HEK293 (cell line): ENCODE measurements at regions of chr11 and their contacts with region 1.

Region 1: GRCh38 chr11:93921695-93922468 is 71.5 kb upstream of the VSTM5 start:
- H3K4me3 ChIP-seq: no peak overlapping the region
- H3K27ac ChIP-seq: no peak overlapping the region
- H3K4me1 ChIP-seq: no peaks in the 10 kb centered on the region
- CTCF ChIP-seq: peak; percentile 40

Region 2: DNA sequence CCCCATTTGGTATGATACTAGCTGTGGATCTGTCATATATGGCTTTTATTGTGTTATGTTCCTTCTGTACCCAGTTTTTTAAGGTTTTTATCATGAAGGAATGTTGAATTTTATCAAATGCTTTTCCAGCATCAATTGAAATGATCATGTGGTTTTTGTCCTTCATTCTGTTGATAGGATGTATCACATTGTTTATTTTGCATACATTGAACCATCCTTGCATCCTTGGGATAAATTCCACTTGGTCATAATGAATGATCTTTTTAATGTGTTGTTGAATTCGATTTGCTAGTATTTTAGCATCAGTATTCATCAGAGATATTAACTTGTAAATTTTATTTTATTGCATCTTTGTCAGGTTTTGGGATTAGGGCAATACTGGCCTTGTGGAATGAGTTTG is 211.6 kb before region 1 on chr11:
- CTCF ChIA-PET with region 1: no interaction called
- POLR2A ChIA-PET with region 1: no interaction called
- H3K4me3 ChIP-seq: no peak overlapping the region
- H3K27ac ChIP-seq: no peak overlapping the region
- H3K4me1 ChIP-seq: no peaks in the 10 kb centered on the region
- CTCF ChIP-seq: no peak

Region 3: DNA sequence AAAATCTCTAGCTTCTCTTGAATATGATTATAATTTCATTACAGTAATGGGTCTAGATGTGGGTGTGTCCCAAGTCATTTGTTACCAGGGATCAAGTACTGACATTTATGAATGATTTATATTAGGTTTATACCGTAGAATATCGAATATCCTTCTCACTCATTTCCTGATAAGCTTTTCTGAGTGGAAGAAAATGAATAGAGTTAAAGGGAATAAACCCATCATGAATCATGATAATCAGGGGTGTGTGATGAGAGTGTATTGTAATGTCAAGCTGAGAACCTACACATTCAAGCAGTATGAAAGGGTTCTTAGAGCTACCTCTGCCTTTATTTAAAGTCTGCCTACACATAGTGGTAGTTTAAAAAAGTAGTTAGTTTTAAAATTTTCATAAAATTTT is 120.5 kb before region 1 on chr11:
- CTCF ChIA-PET with region 1: no interaction called
- POLR2A ChIA-PET with region 1: no interaction called
- H3K4me3 ChIP-seq: no peak overlapping the region
- H3K27ac ChIP-seq: no peak overlapping the region
- H3K4me1 ChIP-seq: no peaks in the 10 kb centered on the region
- CTCF ChIP-seq: no peak

Region 4: GRCh38 chr11:93869830-93870229 is 52.1 kb before region 1 on chr11:
- CTCF ChIA-PET with region 1: no interaction called
- POLR2A ChIA-PET with region 1: no interaction called
- H3K4me3 ChIP-seq: no peak overlapping the region
- H3K27ac ChIP-seq: no peak overlapping the region
- H3K4me1 ChIP-seq: no peaks in the 10 kb centered on the region
- CTCF ChIP-seq: no peak

Region 5: DNA sequence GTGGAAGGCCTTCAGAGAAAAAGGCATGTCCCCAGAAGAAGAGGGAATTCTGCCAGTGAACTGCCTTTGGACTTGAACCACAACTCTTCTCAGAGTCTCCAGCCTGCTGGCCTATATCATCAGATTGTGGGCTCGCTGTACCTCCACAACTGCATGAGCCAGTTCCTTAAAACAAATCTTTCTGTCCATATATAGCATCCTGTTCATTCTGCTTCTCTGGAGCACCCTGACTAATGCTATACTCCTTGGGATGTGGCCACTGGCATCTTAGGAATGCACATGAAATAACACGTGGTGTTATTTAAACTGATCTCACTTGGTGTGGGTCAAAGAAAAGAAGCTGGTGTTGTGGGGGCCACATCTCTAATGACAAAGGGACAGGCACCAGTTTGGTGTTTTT is 13.2 kb before region 1 on chr11:
- CTCF ChIA-PET with region 1: interaction called, 14 read pairs
- POLR2A ChIA-PET with region 1: no interaction called
- H3K4me3 ChIP-seq: no peak overlapping the region
- H3K27ac ChIP-seq: no peak overlapping the region
- H3K4me1 ChIP-seq: no peaks in the 10 kb centered on the region
- CTCF ChIP-seq: no peak

Region 6: GRCh38 chr11:93933230-93933629 is 11.3 kb after region 1 on chr11:
- CTCF ChIA-PET with region 1: interaction called, 21 read pairs
- POLR2A ChIA-PET with region 1: no interaction called
- H3K4me3 ChIP-seq: no peak overlapping the region
- H3K27ac ChIP-seq: no peak overlapping the region
- H3K4me1 ChIP-seq: no peaks in the 10 kb centered on the region
- CTCF ChIP-seq: no peak

Region 7: GRCh38 chr11:93942176-93942575 is 20.3 kb after region 1 on chr11:
- CTCF ChIA-PET with region 1: interaction called, 10 read pairs
- POLR2A ChIA-PET with region 1: no interaction called
- H3K4me3 ChIP-seq: no peak overlapping the region
- H3K27ac ChIP-seq: no peak overlapping the region
- H3K4me1 ChIP-seq: no peaks in the 10 kb centered on the region
- CTCF ChIP-seq: no peak

Region 8: DNA sequence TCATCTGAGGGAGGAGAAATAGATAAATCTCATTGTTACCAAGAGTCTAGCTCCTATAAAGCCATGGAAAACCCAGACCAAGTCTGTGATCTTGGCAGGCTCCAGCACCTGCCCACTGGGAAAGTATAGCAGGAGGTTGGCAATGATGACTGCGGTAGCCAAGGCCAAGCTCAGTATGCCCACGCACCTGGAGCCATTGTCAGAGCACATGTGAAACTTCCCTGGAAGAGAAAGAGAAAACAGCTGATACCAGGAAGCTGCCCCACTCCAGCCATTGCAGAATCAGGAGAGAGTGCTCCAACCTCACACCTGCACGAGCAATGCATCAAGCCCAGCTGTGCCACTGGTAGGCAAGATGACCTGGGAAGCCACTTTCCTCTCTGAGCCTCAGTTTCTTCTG is 37.1 kb after region 1 on chr11:
- CTCF ChIA-PET with region 1: no interaction called
- POLR2A ChIA-PET with region 1: no interaction called
- H3K4me3 ChIP-seq: no peak overlapping the region
- H3K27ac ChIP-seq: no peak overlapping the region
- H3K4me1 ChIP-seq: no peaks in the 10 kb centered on the region
- CTCF ChIP-seq: no peak

Region 9: DNA sequence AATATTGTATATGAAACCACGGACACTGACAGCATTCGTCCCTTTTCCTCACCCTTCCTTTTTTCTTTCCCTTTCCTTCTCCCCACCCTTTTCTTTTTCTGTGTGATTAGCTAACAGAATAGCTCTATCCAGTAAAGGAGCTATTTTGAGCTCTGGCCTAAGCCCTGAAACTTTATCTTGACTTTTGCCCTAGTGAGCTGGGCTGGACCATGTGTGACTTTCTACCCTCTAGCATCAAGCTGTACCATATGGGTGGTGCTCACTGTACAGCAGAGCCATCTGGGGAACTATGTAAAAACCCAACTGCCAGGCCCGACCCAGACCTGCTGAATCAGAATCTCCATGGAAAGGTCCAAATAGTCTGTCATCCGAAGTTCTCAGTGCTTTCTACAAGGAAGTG is 184.8 kb after region 1 on chr11:
- CTCF ChIA-PET with region 1: interaction called, 12 read pairs
- POLR2A ChIA-PET with region 1: no interaction called
- H3K4me3 ChIP-seq: no peak overlapping the region
- H3K27ac ChIP-seq: no peak overlapping the region
- H3K4me1 ChIP-seq: no peaks in the 10 kb centered on the region
- CTCF ChIP-seq: no peak

Region 10: DNA sequence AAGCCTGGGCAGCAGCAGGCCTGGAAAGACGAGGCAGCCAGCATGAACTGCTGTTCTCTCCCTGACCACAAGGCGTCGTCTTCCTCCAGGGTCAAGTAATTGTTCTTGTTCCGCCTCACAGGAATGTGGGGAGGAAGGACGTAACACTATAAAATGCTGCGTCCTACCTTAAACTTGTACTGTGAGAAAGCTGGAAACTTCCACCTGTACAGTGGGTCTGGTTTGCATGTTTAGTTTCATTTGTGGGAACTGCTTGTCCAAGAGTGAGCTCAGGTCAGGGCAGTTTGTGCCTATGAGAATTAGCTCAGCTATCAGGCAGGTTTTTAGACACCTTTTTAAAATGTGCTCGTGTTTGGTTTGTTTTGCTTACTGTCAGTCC is 262.0 kb after region 1 on chr11:
- CTCF ChIA-PET with region 1: interaction called, 28 read pairs
- POLR2A ChIA-PET with region 1: no interaction called
- H3K4me3 ChIP-seq: no peak overlapping the region
- H3K27ac ChIP-seq: no peak overlapping the region
- H3K4me1 ChIP-seq: no peaks in the 10 kb centered on the region
- CTCF ChIP-seq: peak; percentile 33; the same call in 1 of the 2 replicates

Region 11: DNA sequence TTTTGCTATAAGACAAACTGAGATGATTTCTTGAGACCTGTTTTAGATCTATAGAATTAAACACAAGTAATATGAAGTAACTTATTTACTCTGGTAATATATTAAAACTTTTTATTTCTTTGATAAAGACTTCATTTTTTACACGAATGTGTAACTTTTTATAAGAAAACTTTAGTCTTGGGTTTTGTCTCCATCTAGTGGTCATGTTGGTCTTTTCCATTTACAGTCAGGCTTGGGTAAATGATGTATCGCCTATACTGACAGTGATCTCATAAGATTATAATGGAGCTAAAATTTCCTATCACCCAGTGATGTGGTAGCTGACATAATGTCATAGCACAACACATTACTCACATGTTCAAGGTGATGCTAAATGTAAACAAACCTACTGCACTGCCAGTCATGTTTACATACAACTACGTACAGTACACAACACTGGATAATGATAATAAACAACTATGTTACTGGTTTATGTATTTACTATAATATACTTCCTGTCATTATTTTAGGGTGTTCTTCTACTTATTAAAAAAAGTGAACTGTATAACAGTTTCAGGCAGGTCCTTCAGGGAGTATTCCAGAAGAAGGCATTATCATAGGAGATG is 582.9 kb after region 1 on chr11:
- CTCF ChIA-PET with region 1: interaction called, 14 read pairs
- POLR2A ChIA-PET with region 1: no interaction called
- H3K4me3 ChIP-seq: no peak overlapping the region
- H3K27ac ChIP-seq: no peak overlapping the region
- H3K4me1 ChIP-seq: no peaks in the 10 kb centered on the region
- CTCF ChIP-seq: no peak